ENCODE measurements at regions of chr19 and their contacts with region 1.

Region 1: GRCh38 chr19:19320362-19321142 is at the starts of genes MAU2 and SUGP1:
- DNase-seq: peak; percentile 89 to 95 (median 95)
- ATAC-seq: peak; percentile 96 to 97
- H3K4me3 ChIP-seq: peak within 1 kb of the TSS; percentile 81
- H3K27ac ChIP-seq: peak within 1 kb of the TSS; percentile 87
- H3K4me1 ChIP-seq: peaks cover 6% of the 10 kb centered on the region
- H3K27me3 ChIP-seq: no peaks in the 10 kb centered on the region
- total RNA-seq, gene MAU2: 26.5 to 36.2 (median 32.2) TPM
- total RNA-seq, gene SUGP1: 34.8 to 44.9 (median 41.5) TPM

Region 2: GRCh38 chr19:19192078-19192882 is 128.3 kb before region 1 on chr19 and contains the starts of genes BORCS8 and RFXANK:
- intact Hi-C with region 1: loop called in 1 of 4 experiments (anchors 10 kb)
- DNase-seq: peak; percentile 99
- ATAC-seq: peak; percentile 97 to 98
- H3K4me3 ChIP-seq: peak within 1 kb of the TSS; percentile 91
- H3K27ac ChIP-seq: peak within 1 kb of the TSS; percentile 100
- H3K4me1 ChIP-seq: peaks cover 6% of the 10 kb centered on the region
- H3K27me3 ChIP-seq: no peaks in the 10 kb centered on the region
- total RNA-seq, gene BORCS8: 27.5 to 33.2 (median 31.3) TPM
- total RNA-seq, gene RFXANK: 35.2 to 46.1 (median 44.7) TPM

Region 3: DNA sequence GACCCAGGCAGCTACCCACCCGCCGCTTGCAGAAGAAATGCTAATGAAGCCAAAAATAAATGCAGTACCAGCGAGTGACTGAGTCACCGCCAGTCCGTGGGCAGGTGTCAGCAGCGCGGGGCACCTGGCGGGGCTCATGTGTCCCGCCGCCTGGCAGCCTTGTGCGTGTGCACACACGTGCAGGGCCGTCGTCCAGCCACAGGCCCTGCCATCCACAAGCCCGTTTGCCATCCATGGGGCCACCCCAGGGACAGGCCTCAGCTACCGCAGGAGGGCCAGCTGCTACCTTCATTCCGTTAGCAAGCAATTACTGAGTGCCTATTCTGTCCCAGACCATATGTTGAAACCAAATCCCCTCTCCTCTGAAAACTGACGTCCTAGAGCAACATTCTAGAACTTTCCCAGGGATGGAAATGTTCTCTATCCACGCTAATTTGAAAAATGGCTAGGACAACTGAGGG is 88.3 kb before region 1 on chr19:
- intact Hi-C with region 1: no loop called
- DNase-seq: no peak
- ATAC-seq: no peak
- H3K4me3 ChIP-seq: no peak overlapping the region
- H3K27ac ChIP-seq: no peak overlapping the region
- H3K4me1 ChIP-seq: no peaks in the 10 kb centered on the region
- H3K27me3 ChIP-seq: no peaks in the 10 kb centered on the region

Measured in right cardiac atrium (tissue), 5 donors.